Right ventricle myocardium superior (tissue), 1 donor: ENCODE measurements at regions of chr13 and their contacts with region 1.

Region 1: GRCh38 chr13:25267715-25268114 is 19.6 kb downstream of the MTMR6 start:
- DNase-seq: no peak
- ATAC-seq: no peak

Region 2: GRCh38 chr13:25214491-25215252 is 53.0 kb before region 1 on chr13:
- intact Hi-C with region 1: no loop called
- DNase-seq: no peak
- ATAC-seq: peak; percentile 64

Region 3: GRCh38 chr13:25310891-25311290 is 43.2 kb after region 1 on chr13:
- intact Hi-C with region 1: loop called (anchors 5 kb)
- DNase-seq: no peak
- ATAC-seq: no peak